Left ventricle myocardium inferior (tissue), 1 donor: ENCODE measurements at regions of chr9 and their contacts with region 1.

Region 1: DNA sequence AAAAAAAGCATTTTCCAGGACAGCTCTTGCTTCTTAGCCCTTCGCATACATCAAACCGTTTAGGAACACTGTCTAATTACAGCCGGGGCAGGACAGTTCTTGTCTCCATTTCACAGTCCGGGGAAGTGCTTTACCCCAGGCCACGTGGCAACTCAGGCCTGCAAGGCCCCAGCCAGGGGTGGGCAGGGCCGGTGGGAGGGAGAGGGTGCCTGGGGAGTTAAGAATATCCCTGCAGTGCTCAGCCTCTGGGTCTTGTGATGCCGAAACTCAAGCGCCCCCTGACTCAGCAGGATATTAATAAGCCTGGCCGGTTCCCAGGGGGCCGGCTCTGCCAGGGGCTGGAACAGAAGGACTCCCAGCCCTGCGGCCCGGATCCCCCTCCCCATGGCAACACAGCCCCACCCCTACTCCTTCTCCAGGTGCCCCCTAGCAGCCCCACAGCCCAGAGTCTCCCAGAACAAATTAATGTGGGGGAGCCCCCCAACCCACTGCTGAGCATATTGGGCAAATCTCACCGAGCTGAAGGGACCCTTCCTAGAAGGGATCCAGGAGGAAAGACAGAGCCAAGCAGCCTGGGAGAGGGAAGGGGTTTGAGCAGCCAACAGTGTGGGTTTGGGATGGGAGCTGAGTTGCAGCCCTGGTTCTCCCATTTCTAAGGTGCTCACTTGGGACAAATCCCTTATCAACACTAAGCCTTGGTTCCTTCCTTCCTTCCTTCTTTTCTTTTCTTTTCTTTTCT is 45.3 kb downstream of the PLPP7 start:
- DNase-seq: peak; percentile 84
- H3K4me3 ChIP-seq: no peak overlapping the region
- H3K27ac ChIP-seq: peak overlapping the region; percentile 86
- H3K4me1 ChIP-seq: peaks cover 36% of the 10 kb centered on the region
- H3K27me3 ChIP-seq: no peaks in the 10 kb centered on the region
- CTCF ChIP-seq: no peak

Region 2: DNA sequence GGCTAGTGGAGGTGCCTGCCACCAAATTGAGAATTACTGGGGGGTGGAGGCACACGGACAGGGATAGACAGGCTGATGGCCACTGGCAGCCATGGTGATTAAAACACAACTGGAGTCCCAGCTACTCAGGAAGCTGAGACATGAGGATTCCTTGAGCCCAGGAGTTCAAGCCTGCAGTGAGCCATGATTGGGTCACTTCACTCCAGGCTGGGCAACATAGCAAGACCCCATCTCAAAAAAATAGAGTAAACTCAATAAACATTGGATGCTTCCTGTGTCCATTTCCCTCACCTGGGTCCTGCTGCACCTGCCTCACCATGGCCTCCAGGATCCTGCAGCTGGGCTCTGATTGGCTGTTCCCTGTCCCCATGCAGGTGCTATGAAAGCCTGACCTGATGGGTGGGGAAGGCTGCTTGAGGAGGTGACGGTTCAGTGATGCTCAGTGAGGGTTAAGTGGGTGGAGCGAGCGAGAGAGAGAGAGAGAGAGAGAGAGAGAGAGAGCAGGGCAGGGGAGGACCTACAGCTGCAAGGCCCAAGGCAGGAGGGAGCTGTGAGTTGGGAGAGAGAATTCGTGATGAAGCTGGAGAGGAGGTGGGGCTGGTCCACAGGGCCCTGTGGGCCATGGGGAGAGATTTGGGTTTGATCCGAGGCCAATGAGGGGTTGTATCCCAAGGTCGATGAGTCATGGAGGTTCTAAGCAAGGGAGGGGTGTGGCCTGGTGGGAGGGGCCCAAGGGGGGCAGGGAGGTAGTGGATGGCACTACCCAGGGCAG is 792.2 kb before region 1 on chr9:
- intact Hi-C with region 1: no loop called
- DNase-seq: no peak
- H3K4me3 ChIP-seq: no peak overlapping the region
- H3K27ac ChIP-seq: no peak overlapping the region
- H3K4me1 ChIP-seq: peaks cover under 1% of the 10 kb centered on the region
- H3K27me3 ChIP-seq: peaks cover 63% of the 10 kb centered on the region
- CTCF ChIP-seq: no peak

Region 3: GRCh38 chr9:131178382-131178781 is 156.4 kb before region 1 on chr9:
- intact Hi-C with region 1: loop called (anchors 1 kb)
- DNase-seq: peak; percentile 68
- H3K4me3 ChIP-seq: no peak overlapping the region
- H3K27ac ChIP-seq: peak overlapping the region; percentile 54
- H3K4me1 ChIP-seq: peaks cover 34% of the 10 kb centered on the region
- H3K27me3 ChIP-seq: no peaks in the 10 kb centered on the region
- CTCF ChIP-seq: peak; percentile 98

Region 4: DNA sequence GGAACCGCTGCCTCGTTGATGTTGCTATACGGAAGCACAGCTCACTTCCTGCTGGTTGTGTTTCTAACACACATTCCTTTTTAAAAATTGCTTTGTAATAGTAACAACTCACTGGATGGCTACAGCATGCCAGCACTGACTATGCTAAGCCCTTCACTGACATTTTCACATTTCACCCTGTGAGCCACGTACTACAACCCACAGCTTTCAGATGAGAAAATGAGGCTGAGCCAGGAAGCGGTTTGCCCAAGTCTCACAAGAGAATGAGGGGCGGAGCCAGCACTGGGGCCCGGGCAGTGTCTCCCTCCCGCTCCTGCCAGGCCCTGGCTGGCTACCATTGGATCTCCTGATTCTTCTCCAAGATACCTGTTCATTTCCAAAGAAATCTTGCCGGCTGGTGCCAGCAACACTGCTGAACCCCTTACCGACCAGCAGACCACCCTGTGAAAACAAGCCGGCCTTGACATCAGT is 96.8 kb before region 1 on chr9:
- intact Hi-C with region 1: loop called (anchors 10 kb)
- DNase-seq: peak; percentile 72
- H3K4me3 ChIP-seq: peak overlapping the region; percentile 42
- H3K27ac ChIP-seq: peak overlapping the region; percentile 93
- H3K4me1 ChIP-seq: peaks cover 52% of the 10 kb centered on the region
- H3K27me3 ChIP-seq: no peaks in the 10 kb centered on the region
- CTCF ChIP-seq: no peak

Region 5: GRCh38 chr9:131441441-131441840 is 106.6 kb after region 1 on chr9:
- intact Hi-C with region 1: no loop called
- DNase-seq: no peak
- H3K4me3 ChIP-seq: no peak overlapping the region
- H3K27ac ChIP-seq: no peak overlapping the region
- H3K4me1 ChIP-seq: peaks cover 5% of the 10 kb centered on the region
- H3K27me3 ChIP-seq: no peaks in the 10 kb centered on the region
- CTCF ChIP-seq: no peak